ENCODE measurements at regions of chr2 and their contacts with region 1.

Region 1: DNA sequence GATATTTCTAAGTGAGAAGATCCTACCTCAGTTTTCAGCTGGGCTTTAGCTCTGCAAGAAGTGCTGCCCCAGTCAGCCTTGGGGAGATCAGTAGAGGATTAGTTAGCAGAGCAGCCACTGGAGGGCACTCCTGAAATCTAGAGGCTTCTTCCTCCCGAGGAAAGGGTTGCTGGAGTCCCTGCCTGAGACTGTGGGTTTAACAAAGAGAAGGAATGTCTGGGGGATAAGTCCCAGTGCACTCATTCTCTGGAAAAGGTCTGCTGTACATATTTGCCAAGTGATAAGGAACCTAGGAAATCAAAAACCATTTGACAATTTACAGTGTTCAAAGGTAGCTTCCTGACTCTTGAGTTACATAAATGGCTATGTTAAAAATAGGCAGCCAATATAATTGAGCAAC is 207.2 kb downstream of the SLC8A1 start:
- DNase-seq: no peak
- ATAC-seq: no peak
- H3K4me3 ChIP-seq: no peak overlapping the region
- H3K4me3 Mint-ChIP-seq: no peak overlapping the region
- H3K27ac ChIP-seq: no peak overlapping the region
- H3K27ac Mint-ChIP-seq: no peak overlapping the region
- H3K4me1 ChIP-seq: no peaks in the 10 kb centered on the region
- H3K4me1 Mint-ChIP-seq: peaks cover 0 to 4% (median 0%) of the 10 kb centered on the region in 7 donors
- H3K27me3 ChIP-seq: no peaks in the 10 kb centered on the region
- H3K27me3 Mint-ChIP-seq: no peaks in the 10 kb centered on the region

Region 2: DNA sequence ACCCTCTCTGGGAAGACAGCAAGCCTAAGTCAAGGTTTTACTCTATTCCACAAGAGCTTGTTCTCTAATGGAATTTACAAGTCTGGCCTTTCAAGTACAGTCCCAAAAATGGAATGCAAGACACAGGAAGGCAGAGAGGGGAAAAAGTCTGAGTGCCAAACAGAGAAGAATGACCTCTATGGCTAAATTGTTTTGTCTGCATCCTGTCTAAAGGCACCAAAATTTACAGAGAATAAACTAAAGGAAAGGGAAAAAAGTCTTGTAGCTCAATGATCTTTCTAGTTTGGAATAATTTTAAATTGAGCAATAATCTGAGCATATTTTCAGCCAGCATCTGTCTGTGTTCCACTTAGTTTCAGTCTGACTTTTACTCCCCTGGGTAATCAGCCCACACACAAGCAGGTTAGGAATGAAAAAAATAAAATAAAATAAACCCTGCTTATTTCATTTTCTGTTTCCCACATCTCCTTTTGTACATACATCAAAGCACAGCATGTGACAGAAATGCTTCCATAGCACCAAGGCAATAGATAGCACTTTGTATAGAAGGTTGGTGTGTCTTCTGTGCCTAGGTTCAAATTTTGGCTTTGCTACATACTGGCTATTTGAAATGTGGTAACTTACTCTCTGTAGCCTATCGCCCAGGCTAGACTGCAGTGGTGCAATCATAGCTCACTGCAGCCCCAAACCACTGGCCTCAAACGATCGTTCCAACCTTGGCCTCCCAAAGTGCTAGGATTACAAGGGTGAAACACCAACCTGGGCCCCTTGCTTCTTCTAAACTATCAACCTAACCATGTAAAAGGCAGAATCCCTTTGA is 102.1 kb after region 1 on chr2:
- CTCF ChIA-PET with region 1: no interaction called
- POLR2A ChIA-PET with region 1: no interaction called
- intact Hi-C with region 1: no loop called
- DNase-seq: no peak
- ATAC-seq: no peak
- H3K4me3 ChIP-seq: no peak overlapping the region
- H3K4me3 Mint-ChIP-seq: no peak overlapping the region
- H3K27ac ChIP-seq: no peak overlapping the region
- H3K27ac Mint-ChIP-seq: no peak overlapping the region
- H3K4me1 ChIP-seq: no peaks in the 10 kb centered on the region
- H3K4me1 Mint-ChIP-seq: no peaks in the 10 kb centered on the region
- H3K27me3 ChIP-seq: no peaks in the 10 kb centered on the region
- H3K27me3 Mint-ChIP-seq: no peaks in the 10 kb centered on the region

Region 3: GRCh38 chr2:40554668-40555285 is 310.1 kb after region 1 on chr2:
- CTCF ChIA-PET with region 1: no interaction called
- POLR2A ChIA-PET with region 1: no interaction called
- intact Hi-C with region 1: loop called in 1 of 2 experiments (anchors 2 kb)
- DNase-seq: peak in 6 of 9 donors; percentile 5 to 49 (median 12)
- ATAC-seq: peak; percentile 75
- H3K4me3 ChIP-seq: no peak overlapping the region
- H3K4me3 Mint-ChIP-seq: no peak overlapping the region
- H3K27ac ChIP-seq: no peak overlapping the region
- H3K27ac Mint-ChIP-seq: no peak overlapping the region
- H3K4me1 ChIP-seq: no peaks in the 10 kb centered on the region
- H3K4me1 Mint-ChIP-seq: peaks cover 0 to 2% (median 0%) of the 10 kb centered on the region in 7 donors
- H3K27me3 ChIP-seq: no peaks in the 10 kb centered on the region
- H3K27me3 Mint-ChIP-seq: peaks cover 0 to 7% (median 0%) of the 10 kb centered on the region in 5 donors

Region 4: GRCh38 chr2:41061356-41061755 is 816.7 kb after region 1 on chr2:
- CTCF ChIA-PET with region 1: no interaction called
- POLR2A ChIA-PET with region 1: no interaction called
- intact Hi-C with region 1: no loop called
- DNase-seq: no peak
- ATAC-seq: no peak
- H3K4me3 ChIP-seq: no peak overlapping the region
- H3K4me3 Mint-ChIP-seq: no peak overlapping the region
- H3K27ac ChIP-seq: no peak overlapping the region
- H3K27ac Mint-ChIP-seq: no peak overlapping the region
- H3K4me1 ChIP-seq: no peaks in the 10 kb centered on the region
- H3K4me1 Mint-ChIP-seq: no peaks in the 10 kb centered on the region
- H3K27me3 ChIP-seq: no peaks in the 10 kb centered on the region
- H3K27me3 Mint-ChIP-seq: no peaks in the 10 kb centered on the region

Region 5: DNA sequence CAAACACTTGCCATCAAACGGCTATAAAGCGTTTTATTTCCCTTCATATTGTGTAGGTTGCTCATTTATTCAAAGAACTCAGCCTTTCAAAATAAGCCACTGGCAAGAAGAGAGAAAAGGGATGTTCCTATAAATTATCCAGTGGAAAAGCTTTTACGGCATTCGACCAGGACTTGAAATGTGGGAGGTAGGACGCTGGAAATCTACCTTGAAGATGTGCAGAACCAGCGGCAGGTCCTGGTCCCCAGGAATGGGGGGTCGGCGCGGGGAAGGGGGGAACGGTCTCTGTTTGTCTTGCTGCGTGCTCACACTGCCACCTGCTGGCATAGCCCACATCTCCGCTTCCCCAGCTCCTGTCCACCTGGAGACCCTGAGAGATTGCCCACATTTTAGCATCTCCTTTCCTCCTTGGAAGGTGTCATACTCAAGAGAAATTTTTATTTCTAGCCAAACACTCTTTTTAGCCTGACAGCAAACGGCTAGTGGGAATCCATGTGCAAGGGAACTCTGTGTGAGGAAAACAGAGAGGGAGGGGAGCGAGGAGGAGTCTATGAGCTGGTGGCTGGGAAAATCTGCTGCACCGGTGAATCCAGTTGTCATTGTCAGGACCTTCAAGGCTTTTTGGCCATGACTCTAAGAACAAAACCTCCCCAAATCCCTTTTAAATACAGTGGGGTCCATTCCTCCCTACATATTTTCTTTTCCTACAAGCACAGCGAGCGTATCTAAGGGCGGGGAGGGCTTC is 1454.2 kb after region 1 on chr2:
- CTCF ChIA-PET with region 1: no interaction called
- POLR2A ChIA-PET with region 1: no interaction called
- intact Hi-C with region 1: loop called in 1 of 2 experiments (anchors 10 kb)
- DNase-seq: peak in 1 of 9 donors; percentile 1
- ATAC-seq: no peak
- H3K4me3 ChIP-seq: no peak overlapping the region
- H3K4me3 Mint-ChIP-seq: peak overlapping the region in 1 of 10 donors; percentile 44
- H3K27ac ChIP-seq: no peak overlapping the region
- H3K27ac Mint-ChIP-seq: no peak overlapping the region
- H3K4me1 ChIP-seq: no peaks in the 10 kb centered on the region
- H3K4me1 Mint-ChIP-seq: peaks cover 0 to 7% (median 0%) of the 10 kb centered on the region in 7 donors
- H3K27me3 ChIP-seq: no peaks in the 10 kb centered on the region
- H3K27me3 Mint-ChIP-seq: peaks cover 4 to 33% (median 28%) of the 10 kb centered on the region in 5 donors